T-cell (primary cell): ENCODE measurements at regions of chr2 and their contacts with region 1.

Region 1: GRCh38 chr2:178123163-178123562 is 10.9 kb downstream of the RBM45 start:
- DNase-seq: no peak
- ATAC-seq: no peak
- H3K4me3 ChIP-seq: no peak overlapping the region
- H3K4me3 Mint-ChIP-seq: no peak overlapping the region
- H3K27ac ChIP-seq: no peak overlapping the region
- H3K27ac Mint-ChIP-seq: no peak overlapping the region
- H3K4me1 ChIP-seq: no peaks in the 10 kb centered on the region
- H3K4me1 Mint-ChIP-seq: peaks cover 5 to 14% (median 12%) of the 10 kb centered on the region in 3 donors
- H3K27me3 ChIP-seq: no peaks in the 10 kb centered on the region
- H3K27me3 Mint-ChIP-seq: no peaks in the 10 kb centered on the region

Region 2: DNA sequence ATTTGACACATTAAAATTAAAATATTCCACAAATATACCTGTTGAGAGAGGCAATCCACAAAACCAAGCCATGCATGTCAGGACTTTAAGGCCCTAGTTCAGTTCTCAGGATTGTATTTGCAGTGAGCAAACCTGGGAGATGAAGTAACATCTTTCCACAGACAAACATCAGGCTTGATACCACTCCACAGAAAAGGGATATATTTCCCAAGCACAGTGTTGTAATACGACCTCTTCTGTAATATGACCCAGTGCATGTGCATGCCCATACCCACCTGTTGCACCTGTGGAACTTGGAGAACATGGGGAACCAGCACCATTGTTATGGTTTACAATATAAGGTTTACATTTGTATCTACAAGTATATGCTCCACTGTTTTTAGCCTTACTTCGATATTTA is 234.6 kb before region 1 on chr2:
- CTCF ChIA-PET with region 1: no interaction called
- POLR2A ChIA-PET with region 1: no interaction called
- DNase-seq: no peak
- ATAC-seq: no peak
- H3K4me3 ChIP-seq: no peak overlapping the region
- H3K4me3 Mint-ChIP-seq: no peak overlapping the region
- H3K27ac ChIP-seq: no peak overlapping the region
- H3K27ac Mint-ChIP-seq: no peak overlapping the region
- H3K4me1 ChIP-seq: no peaks in the 10 kb centered on the region
- H3K4me1 Mint-ChIP-seq: no peaks in the 10 kb centered on the region
- H3K27me3 ChIP-seq: peaks cover 0 to 6% of the 10 kb centered on the region in 2 experiments
- H3K27me3 Mint-ChIP-seq: peaks cover 3% of the 10 kb centered on the region in 2 donors

Region 3: GRCh38 chr2:178074657-178075429 is 48.3 kb before region 1 on chr2:
- CTCF ChIA-PET with region 1: no interaction called
- POLR2A ChIA-PET with region 1: no interaction called
- DNase-seq: no peak
- ATAC-seq: no peak
- H3K4me3 ChIP-seq: no peak overlapping the region
- H3K4me3 Mint-ChIP-seq: no peak overlapping the region
- H3K27ac ChIP-seq: no peak overlapping the region
- H3K27ac Mint-ChIP-seq: no peak overlapping the region
- H3K4me1 ChIP-seq: peaks cover 0 to 10% of the 10 kb centered on the region in 2 experiments
- H3K4me1 Mint-ChIP-seq: peaks cover 7 to 11% (median 11%) of the 10 kb centered on the region in 3 donors
- H3K27me3 ChIP-seq: peaks cover 6 to 21% of the 10 kb centered on the region in 2 experiments
- H3K27me3 Mint-ChIP-seq: peaks cover 41 to 46% of the 10 kb centered on the region in 2 donors

Region 4: DNA sequence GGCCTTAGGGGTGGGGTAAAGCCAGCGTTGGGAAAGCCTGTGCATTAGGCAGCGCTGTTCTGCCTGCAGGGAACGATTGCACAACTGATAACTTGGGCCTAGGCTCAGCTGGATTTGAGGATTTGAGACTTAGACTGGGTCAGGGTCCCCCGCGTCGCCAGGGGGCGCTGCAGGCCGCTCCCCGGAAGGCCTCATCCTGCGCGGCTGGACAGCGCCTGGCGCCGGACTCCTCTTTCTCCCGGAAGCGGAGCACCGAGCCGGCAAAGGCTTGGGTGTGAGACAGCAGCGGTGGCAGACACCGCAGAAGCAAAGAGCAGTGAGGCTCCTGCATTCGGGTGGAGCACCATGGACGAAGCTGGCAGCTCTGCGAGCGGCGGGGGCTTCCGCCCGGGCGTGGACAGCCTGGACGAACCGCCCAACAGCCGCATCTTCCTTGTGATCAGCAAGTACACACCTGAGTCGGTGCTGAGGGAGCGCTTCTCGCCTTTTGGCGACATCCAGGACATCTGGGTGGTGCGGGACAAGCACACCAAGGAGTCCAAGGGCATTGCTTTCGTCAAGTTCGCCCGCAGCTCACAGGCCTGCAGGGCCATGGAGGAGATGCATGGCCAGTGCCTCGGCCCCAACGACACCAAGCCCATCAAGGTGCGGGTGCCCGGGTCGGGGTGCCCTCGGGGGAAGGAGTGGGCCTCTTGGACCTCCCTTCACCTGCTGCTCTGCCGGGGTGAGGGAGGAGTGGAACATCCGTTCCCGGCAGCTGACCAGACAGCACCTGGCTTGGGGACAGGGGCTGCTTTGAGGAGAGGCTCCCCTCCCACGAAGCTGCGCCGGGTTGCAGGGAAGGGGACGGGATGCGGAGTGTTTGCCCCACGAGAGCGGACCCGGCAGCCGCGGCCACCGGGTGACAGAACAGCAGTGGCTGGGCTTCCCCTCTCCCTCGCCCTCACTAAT is 10.7 kb before region 1 on chr2 and contains the start of gene RBM45:
- CTCF ChIA-PET with region 1: interaction called, 5 to 10 read pairs
- POLR2A ChIA-PET with region 1: no interaction called
- DNase-seq: peak; percentile 52 to 90 (median 74)
- ATAC-seq: peak; percentile 92 to 93 (median 92)
- H3K4me3 ChIP-seq: peak within 1 kb of the TSS; percentile 83 to 98
- H3K4me3 Mint-ChIP-seq: peak within 1 kb of the TSS; percentile 87 to 95 (median 93)
- H3K27ac ChIP-seq: peak within 1 kb of the TSS; percentile 38
- H3K27ac Mint-ChIP-seq: peak within 1 kb of the TSS; percentile 74 to 89
- H3K4me1 ChIP-seq: peaks cover 2 to 14% of the 10 kb centered on the region in 2 experiments
- H3K4me1 Mint-ChIP-seq: peaks cover 33 to 44% (median 41%) of the 10 kb centered on the region in 3 donors
- H3K27me3 ChIP-seq: peaks cover 0 to 7% of the 10 kb centered on the region in 2 experiments
- H3K27me3 Mint-ChIP-seq: no peaks in the 10 kb centered on the region
- total RNA-seq, gene RBM45: 9.2 to 17.7 (median 15.6) TPM

Region 5: GRCh38 chr2:178163911-178164310 is 40.7 kb after region 1 on chr2:
- CTCF ChIA-PET with region 1: no interaction called
- POLR2A ChIA-PET with region 1: no interaction called
- DNase-seq: no peak
- ATAC-seq: no peak
- H3K4me3 ChIP-seq: no peak overlapping the region
- H3K4me3 Mint-ChIP-seq: no peak overlapping the region
- H3K27ac ChIP-seq: no peak overlapping the region
- H3K27ac Mint-ChIP-seq: no peak overlapping the region
- H3K4me1 ChIP-seq: no peaks in the 10 kb centered on the region
- H3K4me1 Mint-ChIP-seq: no peaks in the 10 kb centered on the region
- H3K27me3 ChIP-seq: peaks cover 0 to 3% of the 10 kb centered on the region in 2 experiments
- H3K27me3 Mint-ChIP-seq: peaks cover 15 to 18% of the 10 kb centered on the region in 2 donors

Region 6: DNA sequence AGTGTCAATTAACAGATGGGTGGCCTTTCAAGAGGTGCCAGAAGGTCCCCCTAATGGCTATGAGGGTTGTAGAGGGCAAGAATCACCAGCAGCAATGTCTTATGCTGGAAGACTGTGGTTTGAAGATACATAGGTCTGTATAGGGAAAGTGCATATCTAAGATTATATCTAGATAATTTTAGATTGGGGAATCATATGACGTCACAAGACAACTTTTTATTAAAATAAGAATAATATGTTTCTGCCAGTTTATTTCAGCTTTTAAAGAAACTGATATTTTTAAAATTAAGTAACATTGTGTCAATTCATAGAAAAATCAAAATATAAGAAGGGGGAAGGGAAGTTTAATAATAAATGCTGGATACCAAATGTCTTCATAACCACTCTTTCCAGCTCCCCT is 521.8 kb after region 1 on chr2:
- CTCF ChIA-PET with region 1: no interaction called
- POLR2A ChIA-PET with region 1: no interaction called
- DNase-seq: no peak
- ATAC-seq: no peak
- H3K4me3 ChIP-seq: no peak overlapping the region
- H3K4me3 Mint-ChIP-seq: no peak overlapping the region
- H3K27ac ChIP-seq: no peak overlapping the region
- H3K27ac Mint-ChIP-seq: no peak overlapping the region
- H3K4me1 ChIP-seq: no peaks in the 10 kb centered on the region
- H3K4me1 Mint-ChIP-seq: no peaks in the 10 kb centered on the region
- H3K27me3 ChIP-seq: no peaks in the 10 kb centered on the region
- H3K27me3 Mint-ChIP-seq: no peaks in the 10 kb centered on the region